Activated CD4-positive, alpha-beta memory T cell treated with anti-CD3 and anti-CD28 coated beads, Interleukin-2, amount 10 ng/mL, durations not matched to agents 7 days and 5 days (primary cell): ENCODE measurements at regions of chr12 and their contacts with region 1.

Region 1: DNA sequence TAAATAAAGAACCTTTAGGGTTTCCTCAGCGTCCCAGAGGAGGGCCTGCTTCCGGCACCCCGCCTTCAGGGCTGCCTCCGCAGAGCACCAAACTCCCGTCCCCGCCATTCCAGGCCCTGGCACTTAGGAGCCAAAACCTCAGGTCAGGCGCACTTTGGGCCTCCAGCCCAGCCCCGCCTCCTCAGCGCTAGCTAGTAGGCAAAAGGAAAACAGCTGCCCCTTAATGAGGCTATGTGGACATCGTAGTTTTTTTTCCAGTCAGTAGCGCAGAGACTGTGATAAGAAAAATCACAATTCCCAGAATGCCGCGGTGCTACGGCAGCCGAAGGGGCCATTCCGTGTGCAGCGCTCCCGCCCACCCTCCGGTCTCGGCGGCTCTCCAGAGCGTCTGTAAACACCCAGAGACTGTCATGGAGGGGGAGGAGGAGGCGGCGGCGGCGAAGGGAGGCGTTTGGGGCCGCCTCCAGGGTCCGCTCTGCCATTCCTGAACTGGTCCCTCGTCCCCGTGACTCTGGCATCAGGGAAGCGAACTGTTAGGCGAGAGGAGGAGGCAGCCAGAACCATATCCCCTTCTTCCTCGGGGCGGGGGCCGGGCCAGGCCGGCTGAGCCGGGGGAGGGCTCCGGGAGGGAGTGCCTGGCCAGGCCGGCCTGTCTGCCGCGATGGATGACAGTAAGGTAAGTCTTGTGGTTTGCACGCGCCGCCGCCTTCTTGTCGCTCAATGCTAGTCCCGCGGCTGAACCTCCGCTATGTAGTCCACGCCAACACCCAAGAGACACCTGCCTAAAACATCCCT is at the start of gene CREBL2:
- DNase-seq: peak; percentile 86
- H3K4me3 Mint-ChIP-seq: peak within 1 kb of the TSS; percentile 89
- H3K27ac Mint-ChIP-seq: peak within 1 kb of the TSS; percentile 95
- H3K4me1 Mint-ChIP-seq: peaks cover 64% of the 10 kb centered on the region
- H3K27me3 Mint-ChIP-seq: no peaks in the 10 kb centered on the region
- total RNA-seq, gene CREBL2: 24.2 to 26.1 TPM

Region 2: DNA sequence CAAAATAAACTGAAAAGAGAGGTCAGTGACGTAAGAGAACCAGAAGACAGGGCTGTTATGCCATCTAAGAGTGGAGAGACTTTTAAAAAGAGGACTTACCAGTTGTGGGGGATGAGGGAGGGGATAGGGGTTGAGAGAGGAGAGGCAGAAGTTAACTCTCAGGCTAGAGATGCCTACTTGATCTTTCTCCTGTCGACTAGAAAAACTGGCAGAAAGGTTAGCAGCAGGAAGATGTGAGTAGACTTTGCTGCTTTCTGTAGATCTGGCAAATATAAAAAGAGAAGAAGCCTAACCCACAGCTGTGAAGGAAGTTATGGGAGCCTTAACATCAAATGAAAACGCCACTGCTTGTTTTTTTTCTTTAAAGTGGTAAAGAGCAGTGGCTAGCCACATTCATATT is 10.7 kb after region 1 on chr12:
- CTCF ChIA-PET with region 1: no interaction called
- POLR2A ChIA-PET with region 1: interaction called, 13 read pairs
- DNase-seq: no peak
- H3K4me3 Mint-ChIP-seq: peak overlapping the region; percentile 4
- H3K27ac Mint-ChIP-seq: peak overlapping the region; percentile 79
- H3K4me1 Mint-ChIP-seq: peaks cover 38% of the 10 kb centered on the region
- H3K27me3 Mint-ChIP-seq: no peaks in the 10 kb centered on the region

Region 3: GRCh38 chr12:12696562-12697383 is 85.1 kb after region 1 on chr12:
- CTCF ChIA-PET with region 1: no interaction called
- POLR2A ChIA-PET with region 1: interaction called, 21 read pairs
- DNase-seq: peak; percentile 93
- H3K4me3 Mint-ChIP-seq: peak overlapping the region; percentile 83
- H3K27ac Mint-ChIP-seq: peak overlapping the region; percentile 100
- H3K4me1 Mint-ChIP-seq: peaks cover 63% of the 10 kb centered on the region
- H3K27me3 Mint-ChIP-seq: no peaks in the 10 kb centered on the region

Region 4: GRCh38 chr12:12819671-12820311 is 208.1 kb after region 1 on chr12:
- CTCF ChIA-PET with region 1: no interaction called
- POLR2A ChIA-PET with region 1: no interaction called
- DNase-seq: no peak
- H3K4me3 Mint-ChIP-seq: no peak overlapping the region
- H3K27ac Mint-ChIP-seq: no peak overlapping the region
- H3K4me1 Mint-ChIP-seq: peaks cover 46% of the 10 kb centered on the region
- H3K27me3 Mint-ChIP-seq: no peaks in the 10 kb centered on the region